GM10248 (cell line): ENCODE measurements at regions of chr19 and their contacts with region 1.

Region 1: DNA sequence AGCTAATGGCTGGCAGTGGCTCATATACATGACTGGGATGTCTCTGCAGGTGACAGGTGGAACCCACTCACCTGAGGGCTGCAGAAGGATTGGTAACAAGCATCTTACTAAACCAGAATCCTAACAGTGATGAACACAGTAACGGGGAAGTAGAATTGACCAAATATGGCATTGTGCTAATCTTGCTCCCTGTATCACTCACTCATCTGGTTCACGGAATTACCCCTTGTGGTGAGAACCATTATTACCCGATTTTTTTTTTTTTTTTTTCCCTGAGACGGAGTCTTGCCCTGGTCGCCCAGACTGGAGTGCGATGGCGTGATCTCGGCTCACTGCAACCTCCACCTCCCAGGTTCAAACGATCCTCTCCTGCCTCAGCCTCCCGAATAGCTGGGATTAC is 69.5 kb downstream of the PTPRS start:
- DNase-seq: no peak
- CTCF ChIP-seq: no peak

Region 2: GRCh38 chr19:4660181-4660791 is 610.9 kb before region 1 on chr19:
- CTCF ChIA-PET with region 1: no interaction called
- POLR2A ChIA-PET with region 1: interaction called, 10 read pairs
- DNase-seq: peak; percentile 48
- CTCF ChIP-seq: peak; percentile 53

Region 3: GRCh38 chr19:5103061-5103701 is 168.0 kb before region 1 on chr19:
- CTCF ChIA-PET with region 1: no interaction called
- POLR2A ChIA-PET with region 1: no interaction called
- DNase-seq: no peak
- CTCF ChIP-seq: no peak

Region 4: GRCh38 chr19:5397804-5398692 is 126.9 kb after region 1 on chr19:
- CTCF ChIA-PET with region 1: no interaction called
- POLR2A ChIA-PET with region 1: no interaction called
- DNase-seq: no peak
- CTCF ChIP-seq: no peak